HCT116 (cell line): ENCODE measurements at regions of chr5 and their contacts with region 1.

Region 1: DNA sequence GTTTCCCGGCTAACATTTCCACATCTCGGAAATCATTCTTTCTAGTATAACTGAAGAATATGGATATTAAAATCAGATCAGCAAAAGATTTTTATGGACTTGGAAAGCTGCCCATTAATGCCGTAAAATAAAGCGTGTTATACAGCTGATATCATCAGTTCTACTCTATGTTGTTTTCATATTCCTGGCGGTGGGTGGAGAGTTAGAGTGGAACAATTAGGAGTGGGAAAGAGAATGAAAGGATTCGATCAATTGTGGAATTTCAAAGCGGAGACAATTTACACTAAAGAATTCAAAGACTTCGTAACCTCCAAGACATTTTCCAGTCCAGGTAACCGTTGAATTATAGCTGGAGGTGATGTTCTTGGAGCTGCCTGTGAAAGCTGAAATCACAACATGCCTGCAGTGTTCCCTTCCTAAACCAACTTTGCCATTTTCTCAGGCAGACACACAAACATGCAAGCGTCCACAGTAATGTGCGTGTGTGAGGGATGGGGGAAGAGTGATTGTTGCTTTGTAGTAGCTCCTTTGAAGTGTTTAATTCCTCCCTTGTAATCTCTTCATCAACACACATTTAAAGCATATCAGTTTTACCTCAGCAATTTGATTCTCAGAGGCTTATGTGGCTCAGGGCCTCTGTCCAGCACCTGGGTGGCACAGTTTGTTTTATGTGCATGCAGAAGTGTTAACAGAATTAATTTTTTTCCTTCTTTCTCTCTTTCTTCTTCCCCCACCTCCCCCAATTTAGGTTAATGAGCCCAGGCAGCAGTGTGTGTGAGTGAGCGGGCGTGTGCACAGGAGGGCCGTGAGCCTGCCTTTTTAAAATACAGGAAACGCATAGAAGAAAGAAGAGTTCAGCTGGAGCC is 544.1 kb downstream of the RAB3C start:
- DNase-seq: no peak
- ATAC-seq: peak; percentile 64
- H3K4me3 ChIP-seq: peak overlapping the region; percentile 15 to 46; a peak in 3 of 4 replicates
- H3K27ac ChIP-seq: no peak overlapping the region
- H3K4me1 ChIP-seq: peaks cover 18 to 26% of the 10 kb centered on the region in 2 experiments
- H3K27me3 ChIP-seq: no peaks in the 10 kb centered on the region
- CTCF ChIP-seq: no peak
- POLR2A ChIP-seq: no peak
- RAD21 ChIP-seq: no peak

Region 2: DNA sequence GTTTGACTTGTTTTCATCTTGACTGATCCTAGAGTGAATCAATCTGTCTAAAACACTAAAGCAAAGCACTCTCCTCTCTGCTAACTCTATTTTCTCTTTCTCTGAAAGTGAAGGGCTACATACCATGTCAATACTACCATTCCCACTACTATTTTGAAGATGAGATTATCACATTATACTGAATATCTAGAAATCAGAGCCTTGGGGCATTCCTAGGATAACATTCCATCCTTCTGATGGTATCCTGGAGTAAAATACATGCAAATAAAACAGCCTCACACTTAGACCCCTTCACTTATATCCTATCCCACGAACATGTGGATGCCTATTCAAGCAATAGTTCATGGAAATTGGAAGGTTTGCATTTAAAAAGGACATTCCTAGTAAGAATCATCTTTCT is 1335.1 kb before region 1 on chr5:
- CTCF ChIA-PET with region 1: no interaction called
- POLR2A ChIA-PET with region 1: no interaction called
- RAD21 ChIA-PET with region 1: no interaction called
- intact Hi-C with region 1: loop called (anchors 10 kb)
- DNase-seq: no peak
- ATAC-seq: no peak
- H3K4me3 ChIP-seq: no peak overlapping the region
- H3K27ac ChIP-seq: no peak overlapping the region
- H3K4me1 ChIP-seq: no peaks in the 10 kb centered on the region
- H3K27me3 ChIP-seq: no peaks in the 10 kb centered on the region
- CTCF ChIP-seq: no peak
- POLR2A ChIP-seq: no peak
- RAD21 ChIP-seq: no peak

Region 3: DNA sequence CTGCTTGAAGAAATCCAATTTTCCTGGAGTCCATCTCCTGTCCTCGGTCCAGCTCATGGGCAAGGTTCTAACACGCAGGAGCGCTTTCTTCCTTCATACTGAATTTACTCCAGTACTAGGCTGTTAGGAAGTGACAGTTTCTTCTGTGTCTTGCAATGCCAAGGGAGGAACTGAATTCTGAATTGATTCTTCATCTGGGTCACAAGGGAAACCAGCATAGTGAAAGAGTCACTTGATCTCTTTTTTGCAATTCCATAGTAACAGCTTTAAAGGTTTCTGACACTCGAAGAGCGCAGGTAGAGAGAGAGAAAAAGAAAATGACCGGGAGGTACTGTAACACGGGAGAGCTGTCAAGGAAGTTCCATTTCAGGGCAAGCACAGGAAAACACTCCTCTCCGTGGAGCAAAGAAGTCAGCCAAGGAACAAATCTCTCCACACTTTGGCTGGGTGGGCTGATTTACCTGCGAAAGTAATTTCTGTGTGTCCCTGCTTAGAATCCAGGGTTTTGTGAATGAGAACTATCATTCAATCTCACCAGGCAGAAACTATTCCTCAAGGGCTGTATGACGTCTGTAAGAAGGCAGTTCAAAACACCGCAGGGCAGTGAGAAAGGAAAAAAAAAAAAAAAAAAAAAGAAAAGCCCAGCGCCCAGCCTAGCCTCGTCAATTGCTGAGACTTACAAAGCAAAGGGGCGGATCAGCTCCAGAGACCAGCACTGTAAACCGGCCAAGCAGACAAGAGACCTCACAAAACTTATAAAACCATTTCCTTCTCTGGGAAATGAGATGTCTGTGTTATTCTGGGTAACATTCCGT is 148.8 kb after region 1 on chr5:
- CTCF ChIA-PET with region 1: no interaction called
- POLR2A ChIA-PET with region 1: no interaction called
- RAD21 ChIA-PET with region 1: no interaction called
- intact Hi-C with region 1: no loop called
- DNase-seq: no peak
- ATAC-seq: no peak
- H3K4me3 ChIP-seq: no peak overlapping the region
- H3K27ac ChIP-seq: no peak overlapping the region
- H3K4me1 ChIP-seq: no peaks in the 10 kb centered on the region
- H3K27me3 ChIP-seq: peaks cover 17% of the 10 kb centered on the region
- CTCF ChIP-seq: no peak
- POLR2A ChIP-seq: no peak
- RAD21 ChIP-seq: no peak